ENCODE measurements at regions of chr11 and their contacts with region 1.

Region 1: GRCh38 chr11:133895061-133895479 is 49.8 kb upstream of the SPATA19 start:
- DNase-seq: no peak
- ATAC-seq: no peak
- H3K4me3 ChIP-seq: no peak overlapping the region
- H3K27ac ChIP-seq: no peak overlapping the region
- H3K4me1 ChIP-seq: no peaks in the 10 kb centered on the region
- H3K27me3 ChIP-seq: no peaks in the 10 kb centered on the region
- CTCF ChIP-seq: no peak

Region 2: GRCh38 chr11:133956650-133957633 is 61.9 kb after region 1 on chr11 and contains the start of gene IGSF9B:
- CTCF ChIA-PET with region 1: no interaction called
- POLR2A ChIA-PET with region 1: no interaction called
- in situ Hi-C with region 1: no loop called
- intact Hi-C with region 1: loop called (anchors 10 kb)
- DNase-seq: peak; percentile 17
- ATAC-seq: peak; percentile 98
- H3K4me3 ChIP-seq: peak within 1 kb of the TSS; percentile 71 to 97
- H3K27ac ChIP-seq: peak within 1 kb of the TSS; percentile 75
- H3K4me1 ChIP-seq: peaks cover 4% of the 10 kb centered on the region; the same call in 1 of the 2 replicates
- H3K27me3 ChIP-seq: peaks cover 11% of the 10 kb centered on the region
- CTCF ChIP-seq: no peak
- total RNA-seq, gene IGSF9B: 2.2 TPM

Region 3: DNA sequence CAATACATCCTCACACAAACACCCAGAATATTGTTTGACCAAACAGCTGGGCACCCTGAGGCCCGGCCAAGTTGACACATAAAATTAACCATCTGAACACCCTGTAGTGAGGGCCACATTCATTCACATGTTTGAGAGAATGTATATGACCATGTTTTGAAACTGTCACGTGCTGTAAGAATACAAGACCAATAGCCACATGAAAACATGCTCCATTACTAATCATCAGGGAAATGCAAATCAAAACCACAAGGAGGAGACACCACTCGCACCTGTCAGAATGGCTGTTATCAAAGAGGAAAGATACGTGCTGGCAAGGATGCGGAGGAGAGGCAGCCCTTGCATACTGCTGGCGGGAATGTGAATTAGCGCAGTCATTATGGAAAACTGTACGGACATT is 100.0 kb after region 1 on chr11:
- CTCF ChIA-PET with region 1: no interaction called
- POLR2A ChIA-PET with region 1: no interaction called
- in situ Hi-C with region 1: no loop called
- intact Hi-C with region 1: no loop called
- DNase-seq: no peak
- ATAC-seq: no peak
- H3K4me3 ChIP-seq: no peak overlapping the region
- H3K27ac ChIP-seq: no peak overlapping the region
- H3K4me1 ChIP-seq: no peaks in the 10 kb centered on the region
- H3K27me3 ChIP-seq: peaks cover 4% of the 10 kb centered on the region; the same call in 1 of the 2 replicates
- CTCF ChIP-seq: no peak